ENCODE measurements at regions of chr5 and their contacts with region 1.

Region 1: GRCh38 chr5:140261403-140262171 is 41.3 kb downstream of the PFDN1 start:
- H3K4me3 ChIP-seq: no peak overlapping the region
- H3K27ac ChIP-seq: no peak overlapping the region
- H3K4me1 ChIP-seq: peaks cover 11% of the 10 kb centered on the region
- CTCF ChIP-seq: no peak

Region 2: GRCh38 chr5:140273401-140273877 is 11.9 kb after region 1 on chr5:
- CTCF ChIA-PET with region 1: interaction called, 11 read pairs
- POLR2A ChIA-PET with region 1: interaction called, 6 read pairs
- H3K4me3 ChIP-seq: no peak overlapping the region
- H3K27ac ChIP-seq: no peak overlapping the region
- H3K4me1 ChIP-seq: no peaks in the 10 kb centered on the region
- CTCF ChIP-seq: no peak

Region 3: GRCh38 chr5:140357726-140358093 is 96.1 kb after region 1 on chr5:
- CTCF ChIA-PET with region 1: interaction called, 15 read pairs
- POLR2A ChIA-PET with region 1: no interaction called
- H3K4me3 ChIP-seq: no peak overlapping the region
- H3K27ac ChIP-seq: no peak overlapping the region
- H3K4me1 ChIP-seq: no peaks in the 10 kb centered on the region
- CTCF ChIP-seq: peak; percentile 89